ENCODE measurements at regions of chr9 and their contacts with region 1.

Region 1: DNA sequence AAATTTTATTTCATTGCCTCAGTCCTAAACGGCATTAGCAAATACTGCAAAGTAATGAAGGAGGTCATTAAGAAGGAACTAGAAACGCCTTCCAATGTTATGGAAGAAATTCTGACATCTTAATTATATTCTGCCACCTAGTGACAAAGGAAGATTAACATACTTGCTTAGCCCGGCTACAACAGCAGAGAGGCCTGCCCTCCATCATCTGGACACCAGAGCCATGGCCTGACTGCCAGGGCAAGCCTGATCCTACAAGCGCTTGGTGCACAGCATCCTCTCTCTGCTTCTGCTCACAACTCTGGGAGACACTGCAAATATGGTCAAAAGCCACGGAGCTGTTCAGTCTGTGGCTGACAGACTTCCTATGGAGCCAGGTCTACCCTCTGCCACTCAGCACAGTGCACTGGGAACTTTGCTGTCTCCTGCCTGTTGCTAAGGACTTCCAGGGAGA is 87.3 kb upstream of the SLC44A1 start:
- DNase-seq: peak in 8 of 10 donors; percentile 23 to 64 (median 56)
- H3K4me3 ChIP-seq: peak overlapping the region in 1 of 59 donors; percentile 2
- H3K27ac ChIP-seq: peak overlapping the region in 36 of 59 donors; percentile 2 to 78 (median 48)
- H3K27me3 ChIP-seq: no peaks in the 10 kb centered on the region
- CTCF ChIP-seq: peak; percentile 47 to 90 (median 72)

Region 2: GRCh38 chr9:104808035-104808614 is 349.0 kb before region 1 on chr9:
- intact Hi-C with region 1: loop called in 1 of 2 experiments (anchors 5 kb)
- DNase-seq: peak in 6 of 10 donors; percentile 28 to 65 (median 55)
- H3K4me3 ChIP-seq: no peak overlapping the region
- H3K27ac ChIP-seq: peak overlapping the region in 3 of 59 donors; percentile 3 to 34 (median 30)
- H3K27me3 ChIP-seq: no peaks in the 10 kb centered on the region
- CTCF ChIP-seq: peak in 50 of 56 donors; percentile 11 to 63 (median 40)

Region 3: DNA sequence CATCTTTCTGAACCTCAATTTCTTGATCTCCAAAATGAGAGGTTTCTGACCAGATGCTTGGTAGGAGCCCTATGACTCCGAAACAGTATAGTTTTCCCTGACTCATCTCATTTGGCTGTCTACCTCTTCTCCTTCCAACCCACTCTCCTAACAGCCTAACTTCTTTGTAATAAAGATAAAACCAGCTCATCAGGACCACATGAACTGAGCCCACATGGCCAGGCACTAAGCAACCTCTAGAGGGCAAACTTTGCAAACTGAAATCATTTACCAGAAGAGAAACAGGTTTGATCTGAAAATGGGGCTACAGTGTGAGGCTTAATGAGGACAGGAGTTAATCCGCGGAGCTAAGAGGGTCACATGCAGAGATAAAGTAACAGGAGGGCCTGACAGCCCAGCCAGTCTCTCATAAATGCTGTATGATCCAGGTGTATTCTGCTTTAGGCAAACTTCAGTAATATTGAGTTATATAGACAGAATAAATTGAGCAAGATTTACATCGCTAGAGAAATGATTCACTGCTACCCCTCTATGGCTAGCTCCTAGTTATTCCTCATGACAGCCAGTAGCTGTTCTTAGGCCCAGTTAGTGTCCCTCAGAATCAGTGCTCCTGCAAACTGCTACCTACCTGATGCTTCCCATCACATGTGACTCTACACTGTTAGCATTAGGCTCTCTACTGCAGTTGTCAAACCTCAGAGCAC is 293.8 kb before region 1 on chr9:
- intact Hi-C with region 1: loop called (anchors 2 kb)
- DNase-seq: peak in 7 of 10 donors; percentile 28 to 68 (median 45)
- H3K4me3 ChIP-seq: peak overlapping the region in 2 of 59 donors; percentile 10 to 26
- H3K27ac ChIP-seq: peak overlapping the region in 12 of 59 donors; percentile 7 to 64 (median 35)
- H3K27me3 ChIP-seq: no peaks in the 10 kb centered on the region
- CTCF ChIP-seq: peak; percentile 66 to 91 (median 84)

Region 4: GRCh38 chr9:104968025-104968982 is 188.9 kb before region 1 on chr9:
- intact Hi-C with region 1: loop called (anchors 10 kb)
- DNase-seq: peak; percentile 85 to 93 (median 90)
- H3K4me3 ChIP-seq: peak overlapping the region; percentile 52 to 99 (median 82)
- H3K27ac ChIP-seq: peak overlapping the region; percentile 89 to 100 (median 98)
- H3K27me3 ChIP-seq: no peaks in the 10 kb centered on the region
- CTCF ChIP-seq: peak in 12 of 56 donors; percentile 6 to 34 (median 23)

Region 5: GRCh38 chr9:105187778-105188177 is 30.6 kb after region 1 on chr9:
- intact Hi-C with region 1: no loop called
- DNase-seq: no peak
- H3K4me3 ChIP-seq: no peak overlapping the region
- H3K27ac ChIP-seq: no peak overlapping the region
- H3K27me3 ChIP-seq: no peaks in the 10 kb centered on the region
- CTCF ChIP-seq: no peak

Region 6: DNA sequence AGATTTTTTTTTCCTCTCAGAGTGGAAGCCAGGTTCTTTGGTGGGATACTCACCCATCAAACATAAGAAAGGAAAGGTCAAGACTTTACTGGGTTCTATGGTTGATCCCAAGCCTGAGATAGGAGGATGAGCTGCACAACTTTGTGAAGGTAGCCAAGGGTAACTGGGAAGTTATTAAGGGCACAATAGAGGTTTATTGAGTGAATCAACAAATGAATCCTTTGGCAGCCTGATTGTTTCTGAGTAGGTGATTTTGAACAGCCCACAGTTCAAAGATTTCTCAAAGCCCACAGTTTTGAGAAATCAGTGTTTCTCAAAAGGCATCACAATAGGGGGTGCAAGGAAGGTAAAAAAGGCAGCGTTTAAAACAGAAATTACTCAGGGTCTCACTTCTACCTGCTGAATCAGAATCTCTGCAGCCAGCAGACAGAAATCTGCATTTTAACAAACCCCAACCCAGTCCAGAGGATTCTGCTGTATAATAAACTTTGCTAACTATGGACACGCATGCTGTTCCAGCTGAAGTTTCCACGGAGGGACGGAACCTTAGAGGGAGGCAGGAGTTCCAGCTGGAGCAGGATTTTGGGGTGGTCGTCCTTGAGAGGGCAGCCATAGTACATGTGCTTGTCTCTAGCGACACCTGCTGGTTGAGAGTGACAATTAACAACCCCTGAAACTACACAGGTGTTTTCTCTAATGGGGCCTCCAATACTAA is 257.9 kb after region 1 on chr9:
- intact Hi-C with region 1: loop called (anchors 2 to 5 kb)
- DNase-seq: peak in 6 of 10 donors; percentile 35 to 67 (median 58)
- H3K4me3 ChIP-seq: peak overlapping the region in 4 of 59 donors; percentile 11 to 33 (median 24)
- H3K27ac ChIP-seq: peak overlapping the region in 44 of 59 donors; percentile 1 to 84 (median 57)
- H3K27me3 ChIP-seq: no peaks in the 10 kb centered on the region
- CTCF ChIP-seq: peak; percentile 77 to 97 (median 88)